ENCODE measurements at regions of chr9 and their contacts with region 1.

Region 1: GRCh38 chr9:129783516-129784361 is 19.2 kb upstream of the TOR1B start:
- DNase-seq: peak; percentile 16
- ATAC-seq: peak; percentile 99
- H3K4me3 ChIP-seq: no peak overlapping the region
- H3K27ac ChIP-seq: no peak overlapping the region
- H3K4me1 ChIP-seq: no peaks in the 10 kb centered on the region
- H3K27me3 ChIP-seq: no peaks in the 10 kb centered on the region; a peak in 1 of 4 replicates
- CTCF ChIP-seq: peak; percentile 88 to 94 (median 89)
- EP300 ChIP-seq: no peak
- POLR2A ChIP-seq: no peak
- RAD21 ChIP-seq: peak; percentile 97

Region 2: GRCh38 chr9:129641746-129642513 is 141.8 kb before region 1 on chr9 and contains the start of gene ASB6:
- CTCF ChIA-PET with region 1: interaction called, 9 read pairs
- POLR2A ChIA-PET with region 1: no interaction called
- RAD21 ChIA-PET with region 1: interaction called, 4 read pairs
- SMC1A ChIA-PET with region 1: no interaction called
- in situ Hi-C with region 1: loop called (anchors 5 kb)
- intact Hi-C with region 1: loop called (anchors 1 kb)
- DNase-seq: peak; percentile 69
- ATAC-seq: peak; percentile 100
- H3K4me3 ChIP-seq: peak within 1 kb of the TSS; percentile 90
- H3K27ac ChIP-seq: peak within 1 kb of the TSS; percentile 63
- H3K4me1 ChIP-seq: peaks cover 6% of the 10 kb centered on the region; the same call in 1 of the 2 replicates
- H3K27me3 ChIP-seq: no peaks in the 10 kb centered on the region
- CTCF ChIP-seq: peak; percentile 80 to 92 (median 89)
- EP300 ChIP-seq: no peak
- POLR2A ChIP-seq: peak; percentile 89
- RAD21 ChIP-seq: peak; percentile 55
- polyA plus RNA-seq, gene ASB6: 0.80 to 1.1 TPM

Region 3: GRCh38 chr9:129648092-129648763 is 135.5 kb before region 1 on chr9:
- CTCF ChIA-PET with region 1: interaction called, 9 read pairs
- POLR2A ChIA-PET with region 1: no interaction called
- RAD21 ChIA-PET with region 1: interaction called, 4 read pairs
- SMC1A ChIA-PET with region 1: no interaction called
- in situ Hi-C with region 1: loop called (anchors 5 kb)
- intact Hi-C with region 1: no loop called
- DNase-seq: no peak
- ATAC-seq: no peak
- H3K4me3 ChIP-seq: no peak overlapping the region
- H3K27ac ChIP-seq: no peak overlapping the region
- H3K4me1 ChIP-seq: no peaks in the 10 kb centered on the region
- H3K27me3 ChIP-seq: no peaks in the 10 kb centered on the region; a peak in 1 of 4 replicates
- CTCF ChIP-seq: no peak
- EP300 ChIP-seq: no peak
- POLR2A ChIP-seq: no peak
- RAD21 ChIP-seq: no peak

Region 4: DNA sequence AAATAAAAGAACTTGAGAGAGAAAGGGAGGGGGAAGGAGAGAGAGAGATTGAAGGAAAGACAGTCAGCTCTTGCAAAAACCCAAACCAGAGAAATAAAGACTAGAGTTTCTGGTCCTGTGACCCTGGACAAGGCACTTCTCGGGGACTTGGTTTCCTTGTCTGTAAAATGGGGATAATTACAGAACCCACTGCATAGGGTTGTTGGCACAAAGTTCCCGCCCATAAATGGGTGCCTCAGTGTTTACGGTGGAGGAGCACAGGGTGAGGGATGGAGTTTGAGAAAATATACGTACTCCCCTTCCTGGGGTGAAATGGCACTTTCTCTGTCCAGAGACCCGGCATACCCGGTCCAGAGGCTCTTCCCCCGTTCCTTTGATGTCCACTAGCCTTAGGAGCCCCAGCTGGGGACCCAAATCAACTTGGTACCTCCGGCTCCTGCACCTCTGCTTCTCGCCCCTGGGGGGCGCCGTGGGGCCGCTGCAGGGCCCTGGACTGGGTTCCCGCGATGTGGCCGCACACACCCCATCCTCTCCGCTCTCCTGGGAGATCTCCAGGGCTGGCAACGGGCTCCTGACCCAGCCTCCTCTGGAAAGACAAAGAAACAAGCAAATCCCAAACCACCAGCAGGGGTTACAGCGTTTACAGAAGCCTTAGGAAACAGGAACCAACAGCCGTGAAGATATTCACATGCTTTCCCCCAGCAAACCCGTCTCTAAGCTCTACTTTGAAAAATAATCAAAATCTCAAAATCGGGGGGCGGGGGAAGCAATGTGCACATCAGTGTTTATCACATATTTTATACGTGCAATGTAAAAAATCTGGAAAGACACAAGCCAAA is 57.2 kb before region 1 on chr9:
- CTCF ChIA-PET with region 1: interaction called, 37 read pairs
- POLR2A ChIA-PET with region 1: no interaction called
- RAD21 ChIA-PET with region 1: interaction called, 6 read pairs
- SMC1A ChIA-PET with region 1: interaction called, 6 read pairs
- in situ Hi-C with region 1: no loop called
- intact Hi-C with region 1: no loop called
- DNase-seq: no peak
- ATAC-seq: peak; percentile 94
- H3K4me3 ChIP-seq: no peak overlapping the region
- H3K27ac ChIP-seq: no peak overlapping the region
- H3K4me1 ChIP-seq: no peaks in the 10 kb centered on the region
- H3K27me3 ChIP-seq: no peaks in the 10 kb centered on the region; a peak in 1 of 4 replicates
- CTCF ChIP-seq: peak; percentile 80 to 93 (median 85)
- EP300 ChIP-seq: no peak
- POLR2A ChIP-seq: no peak
- RAD21 ChIP-seq: peak; percentile 66

Region 5: DNA sequence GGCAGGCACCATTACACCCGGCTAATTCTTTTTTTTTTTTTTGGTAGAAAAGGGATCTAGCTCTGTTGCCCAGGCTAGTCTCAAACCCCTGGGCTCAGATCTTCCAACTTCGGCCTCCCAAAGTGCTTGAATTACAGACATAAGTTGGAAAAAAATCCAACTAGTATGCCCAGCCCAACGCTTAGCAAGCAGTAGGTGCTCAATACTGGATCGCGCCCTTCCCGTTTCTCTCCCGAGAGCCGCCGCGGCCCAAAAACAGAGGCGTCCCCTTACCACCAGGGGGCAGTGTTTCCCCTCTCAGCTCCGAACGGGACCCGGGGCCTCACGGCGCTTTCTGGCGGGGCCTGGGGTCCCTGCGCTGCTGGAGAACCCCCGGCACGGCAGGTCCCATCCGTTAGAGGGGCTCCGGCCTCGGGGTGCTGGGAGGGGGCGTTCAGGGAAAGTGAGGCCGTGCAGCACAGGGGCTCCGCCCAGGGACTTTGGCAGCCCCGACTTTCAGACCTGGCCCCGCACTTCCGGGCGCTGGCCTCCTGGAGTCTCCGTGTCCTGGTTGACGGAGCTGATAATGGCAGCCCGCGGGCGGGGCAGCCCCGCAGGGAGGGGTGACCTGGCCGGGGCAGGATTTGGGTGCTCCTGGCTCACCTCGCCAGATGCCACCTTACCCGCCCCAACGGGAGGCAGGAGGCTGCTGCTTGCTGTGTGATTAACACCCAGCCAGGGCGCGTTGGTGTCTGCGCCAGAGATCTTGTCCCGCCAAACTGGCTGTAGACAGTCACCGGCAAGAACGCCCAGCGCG is 46.1 kb before region 1 on chr9:
- CTCF ChIA-PET with region 1: interaction called, 29 read pairs
- POLR2A ChIA-PET with region 1: no interaction called
- RAD21 ChIA-PET with region 1: interaction called, 19 read pairs
- SMC1A ChIA-PET with region 1: interaction called, 10 read pairs
- in situ Hi-C with region 1: loop called (anchors 5 kb)
- intact Hi-C with region 1: loop called (anchors 1 kb)
- DNase-seq: peak; percentile 24
- ATAC-seq: peak; percentile 96
- H3K4me3 ChIP-seq: peak overlapping the region; percentile 79
- H3K27ac ChIP-seq: peak overlapping the region; percentile 17
- H3K4me1 ChIP-seq: peaks cover 6% of the 10 kb centered on the region
- H3K27me3 ChIP-seq: no peaks in the 10 kb centered on the region
- CTCF ChIP-seq: peak; percentile 85 to 96 (median 86)
- EP300 ChIP-seq: no peak
- POLR2A ChIP-seq: peak; percentile 63
- RAD21 ChIP-seq: peak; percentile 69

Region 6: DNA sequence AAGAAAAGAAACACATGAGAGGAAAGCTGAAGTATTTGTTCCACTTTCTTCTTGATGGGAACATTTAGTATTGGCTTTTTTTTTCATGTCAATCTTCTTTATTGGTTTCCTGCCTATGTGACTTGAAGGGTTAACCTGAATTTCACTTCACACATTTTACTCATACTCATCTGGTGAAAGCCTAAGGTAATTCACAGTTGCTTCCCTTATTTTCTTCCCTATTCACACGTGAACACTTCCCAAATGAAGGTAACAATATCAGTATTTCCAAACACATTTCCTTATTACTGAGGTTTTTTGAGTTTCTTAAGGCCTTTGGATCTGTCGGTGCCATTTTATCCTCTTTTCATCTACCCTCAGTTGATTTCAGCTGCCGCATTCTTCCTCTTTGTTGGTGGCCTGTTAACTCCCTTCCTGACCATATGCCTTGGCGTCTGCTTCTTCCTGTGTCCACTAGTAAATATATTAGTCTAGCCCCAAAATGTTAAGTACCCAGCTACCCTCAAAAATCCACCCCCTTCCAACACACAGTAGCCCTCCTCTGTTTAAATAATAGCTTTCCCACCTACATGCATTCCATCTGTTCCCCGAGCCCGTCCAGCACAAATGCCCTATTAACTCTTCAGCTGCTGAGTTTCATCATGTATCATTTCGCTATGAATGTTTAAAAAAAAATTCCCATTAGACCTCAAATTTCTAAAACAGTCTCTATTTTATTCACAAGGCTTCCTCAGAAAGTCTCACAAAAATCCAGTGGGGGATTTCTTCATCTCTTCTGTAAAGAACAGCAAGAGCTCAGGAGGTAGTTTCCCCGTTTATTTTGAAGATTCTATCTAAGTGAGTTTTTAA is 148.8 kb after region 1 on chr9:
- CTCF ChIA-PET with region 1: no interaction called
- POLR2A ChIA-PET with region 1: no interaction called
- RAD21 ChIA-PET with region 1: no interaction called
- SMC1A ChIA-PET with region 1: no interaction called
- in situ Hi-C with region 1: no loop called
- intact Hi-C with region 1: no loop called
- DNase-seq: peak; percentile 47
- ATAC-seq: peak; percentile 52
- H3K4me3 ChIP-seq: no peak overlapping the region
- H3K27ac ChIP-seq: peak overlapping the region; percentile 84
- H3K4me1 ChIP-seq: peaks cover 46% of the 10 kb centered on the region
- H3K27me3 ChIP-seq: no peaks in the 10 kb centered on the region
- CTCF ChIP-seq: no peak
- EP300 ChIP-seq: 0 out of 4 replicates have a peak, but pooled peaks of 1 of the 2 experiments have one; percentile 18
- POLR2A ChIP-seq: no peak
- RAD21 ChIP-seq: no peak

Measured in GM12878 (cell line).